ENCODE measurements at regions of chr1 and their contacts with region 1.

Region 1: GRCh38 chr1:243287652-243288051 is 31.8 kb downstream of the SDCCAG8 start:
- H3K4me3 Mint-ChIP-seq: peak overlapping the region; percentile 24
- H3K27ac Mint-ChIP-seq: peak overlapping the region; percentile 99
- H3K4me1 Mint-ChIP-seq: peaks cover 55% of the 10 kb centered on the region
- H3K27me3 Mint-ChIP-seq: no peaks in the 10 kb centered on the region

Region 2: GRCh38 chr1:243264717-243265116 is 22.9 kb before region 1 on chr1:
- intact Hi-C with region 1: loop called (anchors 2 kb)
- H3K4me3 Mint-ChIP-seq: no peak overlapping the region
- H3K27ac Mint-ChIP-seq: peak overlapping the region; percentile 84
- H3K4me1 Mint-ChIP-seq: peaks cover 63% of the 10 kb centered on the region
- H3K27me3 Mint-ChIP-seq: no peaks in the 10 kb centered on the region

Measured in dendritic cell treated with granulocyte-macrophage colony-stimulating factor and Interleukin-4, amounts not matched to agents 40 ng/mL and 50 ng/mL, for 4 days (primary cell).